ENCODE measurements at regions of chr21 and their contacts with region 1.

Region 1: GRCh38 chr21:16978309-16978895 is 534.4 kb upstream of the CXADR start:
- DNase-seq: no peak
- H3K4me3 ChIP-seq: no peak overlapping the region
- H3K27ac ChIP-seq: no peak overlapping the region
- H3K4me1 ChIP-seq: peaks cover 18% of the 10 kb centered on the region
- H3K27me3 ChIP-seq: no peaks in the 10 kb centered on the region
- CTCF ChIP-seq: no peak
- POLR2A ChIP-seq: no peak

Region 2: GRCh38 chr21:16956824-16957223 is 21.6 kb before region 1 on chr21:
- intact Hi-C with region 1: loop called (anchors 2 kb)
- DNase-seq: no peak
- H3K4me3 ChIP-seq: no peak overlapping the region
- H3K27ac ChIP-seq: no peak overlapping the region
- H3K4me1 ChIP-seq: no peaks in the 10 kb centered on the region
- H3K27me3 ChIP-seq: no peaks in the 10 kb centered on the region
- CTCF ChIP-seq: no peak
- POLR2A ChIP-seq: no peak

Measured in vagina (tissue), 2 donors.